ENCODE measurements at regions of chr6 and their contacts with region 1.

Region 1: DNA sequence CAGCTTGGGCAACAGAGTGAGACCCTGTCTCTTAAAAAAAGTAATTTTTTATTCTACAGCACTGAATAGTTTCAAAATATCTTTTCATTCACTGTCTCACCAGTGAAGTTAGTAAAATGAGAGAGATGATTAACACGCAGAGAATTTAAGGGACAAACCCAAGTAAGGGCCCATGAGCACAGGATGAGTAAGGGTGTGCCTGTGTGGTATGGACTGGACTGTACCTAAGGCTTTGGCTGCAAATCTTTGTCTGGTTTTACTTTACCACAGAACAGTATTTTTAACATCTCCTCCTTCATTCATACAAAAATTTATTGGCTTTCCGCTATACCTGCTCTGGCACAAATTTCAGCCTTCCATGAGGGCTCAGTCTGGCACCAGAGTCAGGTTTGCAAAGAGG is 433.3 kb downstream of the UTRN start:
- DNase-seq: no peak
- ATAC-seq: no peak
- H3K4me3 ChIP-seq: no peak overlapping the region
- H3K4me3 Mint-ChIP-seq: no peak overlapping the region
- H3K27ac ChIP-seq: no peak overlapping the region
- H3K27ac Mint-ChIP-seq: no peak overlapping the region
- H3K4me1 ChIP-seq: no peaks in the 10 kb centered on the region
- H3K4me1 Mint-ChIP-seq: peaks cover 22% of the 10 kb centered on the region
- H3K27me3 ChIP-seq: no peaks in the 10 kb centered on the region
- H3K27me3 Mint-ChIP-seq: no peaks in the 10 kb centered on the region
- CTCF ChIP-seq: no peak

Region 2: DNA sequence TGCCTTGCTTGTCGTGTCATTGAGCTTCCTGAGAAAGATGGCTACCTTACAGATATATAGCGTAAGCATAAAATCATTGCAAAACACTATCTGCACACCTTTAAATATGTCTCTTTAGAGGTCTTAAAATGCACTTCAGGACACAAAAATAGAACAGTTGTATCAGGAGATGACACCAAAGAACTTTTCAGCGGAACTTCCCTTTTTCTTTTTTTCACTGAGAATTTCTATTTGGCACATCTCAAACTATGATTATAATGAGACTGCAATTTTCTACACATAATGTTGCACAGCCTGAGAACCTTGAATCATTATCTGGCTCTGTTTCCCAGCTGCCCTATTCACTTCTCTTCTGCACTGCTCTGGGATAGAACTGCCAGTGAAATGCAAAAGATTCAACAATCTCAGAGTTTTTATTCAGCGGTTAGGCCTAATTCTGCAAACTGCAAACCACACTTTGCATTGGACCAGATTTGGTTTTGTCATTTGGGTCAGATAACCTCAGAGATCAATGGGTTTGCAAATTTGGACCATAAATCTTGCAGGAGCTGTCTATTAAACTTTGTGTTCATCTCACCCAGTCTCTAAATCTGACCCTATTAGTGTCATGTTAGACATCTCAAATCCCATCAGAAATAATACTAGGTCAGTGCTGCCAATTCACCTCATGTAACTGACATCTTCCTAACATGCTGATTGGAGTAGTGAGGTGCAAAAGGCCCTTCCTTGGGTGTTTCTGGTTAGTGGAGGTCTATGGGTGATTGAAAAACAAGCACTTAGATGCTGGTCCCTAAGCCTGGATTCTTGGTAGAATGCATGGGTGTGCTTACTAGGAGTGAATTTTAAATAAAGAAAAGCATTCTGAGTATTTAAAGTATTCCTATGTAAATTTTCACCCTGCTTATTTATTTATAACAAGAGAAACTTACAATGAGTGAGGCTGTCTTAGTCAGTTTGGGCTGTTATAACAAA is 50.6 kb before region 1 on chr6:
- CTCF ChIA-PET with region 1: no interaction called
- POLR2A ChIA-PET with region 1: no interaction called
- intact Hi-C with region 1: loop called in 1 of 2 experiments (anchors 5 kb)
- DNase-seq: no peak
- ATAC-seq: no peak
- H3K4me3 ChIP-seq: no peak overlapping the region
- H3K4me3 Mint-ChIP-seq: no peak overlapping the region
- H3K27ac ChIP-seq: no peak overlapping the region
- H3K27ac Mint-ChIP-seq: peak overlapping the region; percentile 16
- H3K4me1 ChIP-seq: peaks cover 13% of the 10 kb centered on the region
- H3K4me1 Mint-ChIP-seq: peaks cover 61% of the 10 kb centered on the region
- H3K27me3 ChIP-seq: no peaks in the 10 kb centered on the region
- H3K27me3 Mint-ChIP-seq: no peaks in the 10 kb centered on the region
- CTCF ChIP-seq: no peak

Region 3: GRCh38 chr6:144678844-144679243 is 39.6 kb before region 1 on chr6:
- CTCF ChIA-PET with region 1: no interaction called
- POLR2A ChIA-PET with region 1: no interaction called
- intact Hi-C with region 1: no loop called
- DNase-seq: no peak
- ATAC-seq: no peak
- H3K4me3 ChIP-seq: no peak overlapping the region
- H3K4me3 Mint-ChIP-seq: no peak overlapping the region
- H3K27ac ChIP-seq: no peak overlapping the region
- H3K27ac Mint-ChIP-seq: no peak overlapping the region
- H3K4me1 ChIP-seq: no peaks in the 10 kb centered on the region
- H3K4me1 Mint-ChIP-seq: peaks cover 16% of the 10 kb centered on the region
- H3K27me3 ChIP-seq: no peaks in the 10 kb centered on the region
- H3K27me3 Mint-ChIP-seq: no peaks in the 10 kb centered on the region
- CTCF ChIP-seq: no peak

Region 4: GRCh38 chr6:144729502-144729901 is 11.1 kb after region 1 on chr6:
- CTCF ChIA-PET with region 1: no interaction called
- POLR2A ChIA-PET with region 1: no interaction called
- intact Hi-C with region 1: loop called in 1 of 2 experiments (anchors 2 kb)
- DNase-seq: no peak
- ATAC-seq: no peak
- H3K4me3 ChIP-seq: no peak overlapping the region
- H3K4me3 Mint-ChIP-seq: no peak overlapping the region
- H3K27ac ChIP-seq: peak overlapping the region in 1 of 2 experiments; percentile 14
- H3K27ac Mint-ChIP-seq: no peak overlapping the region
- H3K4me1 ChIP-seq: peaks cover 12% of the 10 kb centered on the region
- H3K4me1 Mint-ChIP-seq: peaks cover 35% of the 10 kb centered on the region
- H3K27me3 ChIP-seq: no peaks in the 10 kb centered on the region
- H3K27me3 Mint-ChIP-seq: no peaks in the 10 kb centered on the region
- CTCF ChIP-seq: no peak

Region 5: GRCh38 chr6:145850671-145851070 is 1132.2 kb after region 1 on chr6:
- CTCF ChIA-PET with region 1: no interaction called
- POLR2A ChIA-PET with region 1: no interaction called
- intact Hi-C with region 1: no loop called
- DNase-seq: no peak
- ATAC-seq: no peak
- H3K4me3 ChIP-seq: no peak overlapping the region
- H3K4me3 Mint-ChIP-seq: no peak overlapping the region
- H3K27ac ChIP-seq: no peak overlapping the region
- H3K27ac Mint-ChIP-seq: no peak overlapping the region
- H3K4me1 ChIP-seq: no peaks in the 10 kb centered on the region
- H3K4me1 Mint-ChIP-seq: no peaks in the 10 kb centered on the region
- H3K27me3 ChIP-seq: no peaks in the 10 kb centered on the region
- H3K27me3 Mint-ChIP-seq: no peaks in the 10 kb centered on the region
- CTCF ChIP-seq: no peak

Region 6: GRCh38 chr6:146420255-146420654 is 1701.8 kb after region 1 on chr6:
- CTCF ChIA-PET with region 1: no interaction called
- POLR2A ChIA-PET with region 1: no interaction called
- intact Hi-C with region 1: no loop called
- DNase-seq: no peak
- ATAC-seq: no peak
- H3K4me3 ChIP-seq: no peak overlapping the region
- H3K4me3 Mint-ChIP-seq: no peak overlapping the region
- H3K27ac ChIP-seq: no peak overlapping the region
- H3K27ac Mint-ChIP-seq: no peak overlapping the region
- H3K4me1 ChIP-seq: no peaks in the 10 kb centered on the region
- H3K4me1 Mint-ChIP-seq: no peaks in the 10 kb centered on the region
- H3K27me3 ChIP-seq: peaks cover 0 to 2% of the 10 kb centered on the region in 2 experiments
- H3K27me3 Mint-ChIP-seq: no peaks in the 10 kb centered on the region
- CTCF ChIP-seq: no peak

Measured in CD8-positive, alpha-beta T cell (primary cell).